Aorta (tissue), 5 donors: ENCODE measurements at regions of chr10 and their contacts with region 1.

Region 1: GRCh38 chr10:100009793-100010676 is at the start of gene DNMBP:
- DNase-seq: peak; percentile 90 to 95
- ATAC-seq: peak; percentile 91
- H3K4me3 ChIP-seq: peak within 1 kb of the TSS; percentile 77 to 100
- H3K27ac ChIP-seq: peak within 1 kb of the TSS in 1 of 2 donors; percentile 75
- H3K4me1 ChIP-seq: peaks cover 0 to 2% of the 10 kb centered on the region in 2 donors
- H3K27me3 ChIP-seq: no peaks in the 10 kb centered on the region
- total RNA-seq, gene DNMBP: 13.4 to 23.9 TPM

Region 2: GRCh38 chr10:99917963-99918825 is 91.8 kb before region 1 on chr10:
- intact Hi-C with region 1: loop called in 1 of 2 experiments (anchors 10 kb)
- DNase-seq: peak; percentile 51 to 79
- ATAC-seq: peak; percentile 48
- H3K4me3 ChIP-seq: peak overlapping the region; percentile 10 to 21
- H3K27ac ChIP-seq: peak overlapping the region in 1 of 2 donors; percentile 12
- H3K4me1 ChIP-seq: no peaks in the 10 kb centered on the region
- H3K27me3 ChIP-seq: no peaks in the 10 kb centered on the region

Region 3: GRCh38 chr10:99973190-99973589 is 36.8 kb before region 1 on chr10:
- intact Hi-C with region 1: loop called in 1 of 2 experiments (anchors 5 kb)
- DNase-seq: no peak
- ATAC-seq: no peak
- H3K4me3 ChIP-seq: no peak overlapping the region
- H3K27ac ChIP-seq: no peak overlapping the region
- H3K4me1 ChIP-seq: peaks cover 3 to 9% of the 10 kb centered on the region in 2 donors
- H3K27me3 ChIP-seq: no peaks in the 10 kb centered on the region